Motor neuron (in vitro differentiated cells): ENCODE measurements at regions of chr10 and their contacts with region 1.

Region 1: GRCh38 chr10:129971381-129972144 is 7.5 kb upstream of the EBF3 start:
- ATAC-seq: peak; percentile 81 to 92 (median 88)
- H3K4me3 ChIP-seq: peak overlapping the region; percentile 34 to 48 (median 44)
- H3K27ac ChIP-seq: peak overlapping the region in 1 of 2 donors; percentile 12
- H3K4me1 ChIP-seq: peaks cover 30 to 40% of the 10 kb centered on the region in 2 donors

Region 2: DNA sequence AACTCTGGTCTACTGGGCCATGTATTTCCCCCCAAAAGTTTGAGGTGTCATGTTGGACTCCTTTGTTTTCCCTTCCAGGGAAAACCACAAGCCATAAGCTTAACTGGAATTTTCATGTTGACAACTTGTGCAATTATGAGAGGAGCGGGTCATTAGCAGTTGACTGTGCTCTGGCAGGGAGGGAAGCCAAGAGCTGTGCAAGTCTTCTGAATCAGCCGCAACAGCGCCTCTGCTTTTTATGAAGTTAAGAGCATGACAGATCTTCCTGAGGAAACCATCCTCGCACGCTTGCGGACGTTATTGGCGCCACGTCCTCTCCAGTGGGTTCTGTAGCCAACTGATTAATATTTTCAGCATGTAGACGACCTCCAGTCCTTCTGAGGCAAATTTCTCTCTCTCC is 1696.6 kb before region 1 on chr10:
- in situ Hi-C with region 1: loop called in 5 of 9 experiments (anchors 5 to 25 kb)
- ATAC-seq: peak in 6 of 8 experiments; percentile 38 to 56 (median 46)
- H3K4me3 ChIP-seq: no peak overlapping the region
- H3K27ac ChIP-seq: no peak overlapping the region
- H3K4me1 ChIP-seq: peaks cover 2 to 6% of the 10 kb centered on the region in 2 donors

Region 3: GRCh38 chr10:129030996-129031843 is 940.3 kb before region 1 on chr10:
- in situ Hi-C with region 1: loop called in 8 of 9 experiments (anchors 10 to 25 kb)
- ATAC-seq: peak; percentile 85 to 99 (median 92)
- H3K4me3 ChIP-seq: no peak overlapping the region
- H3K27ac ChIP-seq: no peak overlapping the region
- H3K4me1 ChIP-seq: peaks cover 27 to 75% of the 10 kb centered on the region in 2 donors

Region 4: DNA sequence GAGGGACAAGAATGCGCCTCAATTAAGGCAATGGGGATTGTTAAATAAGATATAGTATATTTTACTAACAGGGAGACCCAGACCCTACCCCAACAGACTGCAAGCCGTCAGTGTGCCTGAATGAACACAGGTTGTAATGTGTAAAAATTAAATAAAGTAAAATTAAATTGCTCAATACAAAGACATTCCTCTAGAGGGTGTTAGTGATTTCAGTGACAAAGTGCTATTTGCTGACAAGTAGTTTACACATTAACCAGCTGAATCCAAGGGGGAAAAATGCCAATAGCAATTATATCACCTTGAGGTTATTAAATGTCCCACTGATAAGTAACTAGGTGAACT is 118.0 kb before region 1 on chr10:
- in situ Hi-C with region 1: loop called in 1 of 9 experiments (anchors 25 kb)
- ATAC-seq: peak in 3 of 8 experiments; percentile 30 to 50 (median 38)
- H3K4me3 ChIP-seq: no peak overlapping the region
- H3K27ac ChIP-seq: no peak overlapping the region
- H3K4me1 ChIP-seq: peaks cover 70 to 76% of the 10 kb centered on the region in 2 donors

Region 5: DNA sequence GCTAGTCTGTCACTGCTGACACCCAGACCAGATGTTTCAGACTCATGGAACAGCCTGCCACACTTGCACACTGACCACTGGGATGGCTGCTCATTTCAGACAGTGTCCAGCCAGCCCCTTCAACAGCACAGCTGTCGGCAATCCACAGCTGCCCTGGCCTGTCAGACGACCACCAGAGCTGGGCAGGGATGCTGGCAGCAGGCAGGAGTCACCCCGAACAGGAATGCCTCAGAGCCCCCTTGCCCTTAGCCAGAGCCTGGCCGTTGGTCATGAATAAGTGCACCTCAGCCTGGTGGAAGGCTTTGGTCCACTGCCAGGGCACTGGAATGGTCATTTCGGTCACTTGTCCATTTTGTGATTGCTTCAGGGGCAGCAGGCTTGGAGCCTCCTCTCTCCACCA is 1489.5 kb after region 1 on chr10:
- in situ Hi-C with region 1: no loop called
- ATAC-seq: no peak
- H3K4me3 ChIP-seq: no peak overlapping the region
- H3K27ac ChIP-seq: no peak overlapping the region
- H3K4me1 ChIP-seq: peaks cover 0 to 5% of the 10 kb centered on the region in 2 donors